Ascending aorta (tissue), 2 donors: ENCODE measurements at regions of chr5 and their contacts with region 1.

Region 1: DNA sequence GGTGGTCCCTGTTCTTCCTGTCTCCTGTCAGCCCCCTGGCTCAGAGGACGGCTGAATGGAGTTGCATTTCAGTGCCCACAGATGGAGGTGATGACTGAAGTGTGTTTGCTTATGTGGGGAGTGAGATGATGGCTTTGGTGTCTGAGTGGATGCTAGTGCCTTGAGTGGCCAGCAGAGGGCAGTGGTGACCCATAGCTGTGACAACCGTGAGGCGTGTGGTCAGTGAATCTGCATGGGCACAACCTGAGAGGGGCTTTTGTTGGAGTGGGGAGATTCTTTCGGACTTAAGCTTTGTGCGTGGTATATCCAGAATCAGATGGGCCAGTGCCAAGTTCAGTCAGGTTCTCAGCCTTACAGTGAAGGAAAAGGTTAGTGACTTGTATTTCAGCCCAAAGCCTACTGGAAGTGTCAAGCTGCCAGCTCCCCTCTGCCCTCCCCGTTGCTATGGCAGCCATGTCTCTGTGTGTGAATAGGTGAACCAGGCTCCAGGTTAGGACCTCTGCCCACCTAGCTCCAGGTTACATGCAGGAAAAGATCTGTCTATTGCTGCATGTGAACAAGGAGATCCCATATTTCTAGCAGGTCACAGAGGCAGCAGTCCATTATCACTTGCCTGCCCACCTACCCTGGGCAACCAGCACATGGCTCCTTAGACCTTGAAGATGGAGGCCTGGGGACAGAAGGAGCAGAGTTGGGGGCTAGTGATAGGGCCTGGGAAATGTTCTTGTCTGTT is 14.7 kb upstream of the CXXC5 start:
- DNase-seq: no peak
- H3K4me3 ChIP-seq: no peak overlapping the region
- H3K27ac ChIP-seq: no peak overlapping the region
- H3K4me1 ChIP-seq: peaks cover 7 to 26% of the 10 kb centered on the region in 2 donors
- H3K27me3 ChIP-seq: no peaks in the 10 kb centered on the region
- CTCF ChIP-seq: peak; percentile 90 to 98 (median 98)

Region 2: GRCh38 chr5:139593716-139594319 is 39.6 kb before region 1 on chr5:
- intact Hi-C with region 1: no loop called
- DNase-seq: no peak
- H3K4me3 ChIP-seq: no peak overlapping the region
- H3K27ac ChIP-seq: peak overlapping the region; percentile 8 to 33
- H3K4me1 ChIP-seq: peaks cover 0 to 9% of the 10 kb centered on the region in 2 donors
- H3K27me3 ChIP-seq: no peaks in the 10 kb centered on the region
- CTCF ChIP-seq: no peak

Region 3: DNA sequence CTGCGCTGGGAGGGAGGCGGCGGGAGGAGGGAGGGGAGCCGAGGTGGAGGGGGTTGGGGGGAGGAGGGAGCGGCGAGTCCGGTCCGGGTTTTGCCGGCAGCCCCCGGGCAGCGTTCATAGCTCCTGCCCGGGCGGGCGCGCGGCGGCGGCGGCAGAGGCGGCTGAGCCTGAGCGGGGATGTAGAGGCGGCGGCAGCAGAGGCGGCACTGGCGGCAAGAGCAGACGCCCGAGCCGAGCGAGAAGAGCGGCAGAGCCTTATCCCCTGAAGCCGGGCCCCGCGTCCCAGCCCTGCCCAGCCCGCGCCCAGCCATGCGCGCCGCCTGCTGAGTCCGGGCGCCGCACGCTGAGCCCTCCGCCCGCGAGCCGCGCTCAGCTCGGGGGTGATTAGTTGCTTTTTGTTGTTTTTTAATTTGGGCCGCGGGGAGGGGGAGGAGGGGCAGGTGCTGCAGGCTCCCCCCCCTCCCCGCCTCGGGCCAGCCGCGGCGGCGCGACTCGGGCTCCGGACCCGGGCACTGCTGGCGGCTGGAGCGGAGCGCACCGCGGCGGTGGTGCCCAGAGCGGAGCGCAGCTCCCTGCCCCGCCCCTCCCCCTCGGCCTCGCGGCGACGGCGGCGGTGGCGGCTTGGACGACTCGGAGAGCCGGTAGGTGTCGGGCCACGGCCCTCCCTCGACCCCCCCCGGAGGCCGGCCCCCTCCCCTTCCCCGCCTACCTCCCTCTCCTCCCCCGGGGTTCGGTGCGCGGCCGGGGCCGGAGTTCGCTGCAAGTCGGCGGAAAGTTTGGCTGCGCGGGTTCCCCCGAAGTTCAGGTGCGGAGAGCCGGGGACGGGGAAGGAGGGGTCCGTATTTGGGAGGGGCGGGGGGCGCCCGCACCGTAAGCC is 15.0 kb after region 1 on chr5 and contains the start of gene CXXC5:
- intact Hi-C with region 1: loop called (anchors 1 kb)
- DNase-seq: peak in 1 of 2 donors; percentile 88
- H3K4me3 ChIP-seq: peak within 1 kb of the TSS; percentile 76 to 79
- H3K27ac ChIP-seq: peak within 1 kb of the TSS; percentile 96
- H3K4me1 ChIP-seq: peaks cover 15 to 28% of the 10 kb centered on the region in 2 donors
- H3K27me3 ChIP-seq: no peaks in the 10 kb centered on the region
- CTCF ChIP-seq: no peak
- total RNA-seq, gene CXXC5: 41.9 TPM

Region 4: DNA sequence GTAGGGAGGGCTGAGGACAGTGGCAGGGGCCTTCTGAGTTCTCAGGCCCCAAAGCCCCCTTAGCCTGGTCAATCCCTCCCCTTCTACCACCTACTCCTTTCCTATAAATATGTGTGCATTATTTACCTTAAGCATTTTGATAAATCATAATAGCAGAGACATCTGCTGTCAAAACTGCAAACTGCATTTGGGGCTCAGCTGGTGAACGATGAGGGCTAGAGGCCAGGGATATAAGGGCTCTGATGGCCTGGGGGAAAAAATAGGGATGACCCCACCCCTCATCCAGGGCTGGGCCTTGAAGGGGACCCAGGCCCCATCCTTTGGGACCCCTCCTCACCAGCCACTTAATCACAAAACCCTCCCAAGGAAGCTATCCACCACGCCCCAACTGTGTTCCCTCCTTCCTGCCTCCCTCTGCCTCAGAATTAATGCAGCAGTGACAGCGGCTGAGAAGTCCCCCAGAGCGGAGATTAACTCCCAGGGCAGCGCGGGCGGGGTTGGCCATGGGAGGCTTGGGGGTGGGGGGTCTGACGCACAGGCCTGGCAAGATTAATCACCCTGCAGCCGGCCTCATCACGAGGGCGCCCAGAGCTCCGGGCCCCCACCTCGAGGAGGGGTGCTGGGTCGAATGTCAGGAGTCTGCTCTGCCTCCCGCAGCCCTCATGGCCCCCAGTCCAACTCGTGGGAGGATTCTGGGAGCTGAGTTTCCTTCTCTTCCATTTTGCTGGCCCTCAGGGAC is 56.8 kb after region 1 on chr5:
- intact Hi-C with region 1: loop called (anchors 1 kb)
- DNase-seq: no peak
- H3K4me3 ChIP-seq: no peak overlapping the region
- H3K27ac ChIP-seq: peak overlapping the region in 1 of 2 donors; percentile 21
- H3K4me1 ChIP-seq: peaks cover 0 to 37% of the 10 kb centered on the region in 2 donors
- H3K27me3 ChIP-seq: no peaks in the 10 kb centered on the region
- CTCF ChIP-seq: peak; percentile 55 to 73 (median 69)

Region 5: GRCh38 chr5:139711067-139711905 is 77.8 kb after region 1 on chr5:
- intact Hi-C with region 1: loop called (anchors 2 kb)
- DNase-seq: peak in 1 of 2 donors; percentile 84
- H3K4me3 ChIP-seq: peak overlapping the region; percentile 59 to 60
- H3K27ac ChIP-seq: peak overlapping the region; percentile 66 to 71
- H3K4me1 ChIP-seq: peaks cover 8 to 27% of the 10 kb centered on the region in 2 donors
- H3K27me3 ChIP-seq: no peaks in the 10 kb centered on the region
- CTCF ChIP-seq: peak in 1 of 3 experiments; percentile 12

Region 6: DNA sequence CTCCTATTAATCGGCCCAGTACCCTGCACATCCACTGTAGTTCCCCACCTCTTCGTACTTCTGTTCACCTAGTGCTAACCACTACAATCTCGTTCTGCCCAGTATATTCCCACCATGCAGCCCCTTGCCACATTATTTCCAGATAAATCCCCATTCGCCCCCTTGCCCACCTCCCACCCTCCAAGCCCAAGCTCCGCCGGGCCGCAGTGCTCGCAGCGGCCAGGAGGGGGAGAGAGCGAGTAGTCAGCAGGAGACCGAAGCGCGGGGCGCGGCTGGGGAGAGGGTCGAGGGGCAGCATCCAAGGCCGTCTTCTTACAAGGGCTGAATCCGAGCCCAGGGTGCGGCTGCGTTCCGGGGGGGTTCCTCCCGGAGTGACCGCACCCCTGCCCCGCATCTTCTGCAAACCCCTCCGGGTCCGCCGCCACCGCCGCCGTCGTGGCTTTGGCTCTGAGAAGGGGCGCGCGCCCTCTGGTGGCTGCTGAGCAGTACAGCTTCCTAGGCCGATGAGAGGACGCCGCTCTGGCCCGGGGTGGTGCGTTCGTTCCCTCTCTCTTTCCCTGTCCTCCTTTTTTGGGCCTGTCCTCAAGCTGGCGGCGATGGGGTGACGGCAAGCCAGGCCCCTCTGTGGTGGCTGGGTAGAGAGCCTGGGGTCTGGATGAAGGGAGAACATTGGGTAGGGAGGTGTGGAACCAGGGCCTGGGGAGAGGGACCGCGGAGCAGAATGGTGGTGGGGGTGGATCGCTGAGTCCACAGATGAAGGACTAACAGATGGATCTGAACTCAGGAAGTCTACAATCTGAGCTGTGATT is 132.2 kb after region 1 on chr5:
- intact Hi-C with region 1: loop called (anchors 1 kb)
- DNase-seq: peak in 1 of 2 donors; percentile 84
- H3K4me3 ChIP-seq: peak overlapping the region; percentile 47 to 67
- H3K27ac ChIP-seq: no peak overlapping the region
- H3K4me1 ChIP-seq: peaks cover 0 to 7% of the 10 kb centered on the region in 2 donors
- H3K27me3 ChIP-seq: peaks cover 8% of the 10 kb centered on the region
- CTCF ChIP-seq: peak; percentile 94 to 99 (median 99)

Region 7: DNA sequence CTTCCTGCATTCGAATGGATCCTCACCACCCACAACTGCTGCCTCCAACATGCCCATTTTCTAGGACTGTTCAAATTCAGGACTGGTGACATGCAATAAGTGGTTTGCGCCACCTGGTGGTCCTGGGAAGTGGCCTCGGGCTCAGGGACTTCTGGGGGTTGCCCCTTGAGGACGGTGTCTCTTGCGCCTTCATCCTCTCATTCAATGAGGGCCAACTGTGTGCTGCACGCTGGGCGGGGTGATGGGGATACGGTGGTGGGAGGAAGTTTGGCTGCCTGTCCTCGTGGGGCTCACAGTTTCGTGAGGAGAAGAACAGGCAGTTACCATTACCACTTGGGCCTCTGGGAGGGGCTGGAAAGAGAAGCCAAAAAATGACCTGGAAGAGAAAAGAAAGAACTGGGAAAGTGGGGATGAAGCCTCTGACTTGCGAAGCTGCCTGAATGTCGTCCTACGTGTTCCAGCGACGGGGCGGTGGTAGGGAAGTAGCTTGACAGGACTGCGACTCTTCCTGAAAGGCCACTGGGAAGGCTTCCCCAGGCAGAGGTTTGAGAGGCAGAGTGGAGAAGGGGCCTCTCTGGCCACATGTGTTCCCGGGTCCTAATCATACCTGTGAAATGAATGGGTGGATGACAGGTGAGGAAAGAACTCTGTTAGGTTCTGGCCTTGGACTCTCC is 211.1 kb after region 1 on chr5:
- intact Hi-C with region 1: loop called (anchors 5 kb)
- DNase-seq: peak in 1 of 2 donors; percentile 86
- H3K4me3 ChIP-seq: no peak overlapping the region
- H3K27ac ChIP-seq: no peak overlapping the region
- H3K4me1 ChIP-seq: peaks cover 0 to 11% of the 10 kb centered on the region in 2 donors
- H3K27me3 ChIP-seq: no peaks in the 10 kb centered on the region
- CTCF ChIP-seq: peak; percentile 49 to 75 (median 56)

Region 8: GRCh38 chr5:139903795-139904565 is 270.5 kb after region 1 on chr5:
- intact Hi-C with region 1: no loop called
- DNase-seq: peak in 1 of 2 donors; percentile 61
- H3K4me3 ChIP-seq: peak overlapping the region; percentile 54 to 68
- H3K27ac ChIP-seq: no peak overlapping the region
- H3K4me1 ChIP-seq: peaks cover 8 to 14% of the 10 kb centered on the region in 2 donors
- H3K27me3 ChIP-seq: peaks cover 5% of the 10 kb centered on the region
- CTCF ChIP-seq: no peak